Adrenal gland (tissue), 19 donors: ENCODE measurements at regions of chr1 and their contacts with region 1.

Region 1: DNA sequence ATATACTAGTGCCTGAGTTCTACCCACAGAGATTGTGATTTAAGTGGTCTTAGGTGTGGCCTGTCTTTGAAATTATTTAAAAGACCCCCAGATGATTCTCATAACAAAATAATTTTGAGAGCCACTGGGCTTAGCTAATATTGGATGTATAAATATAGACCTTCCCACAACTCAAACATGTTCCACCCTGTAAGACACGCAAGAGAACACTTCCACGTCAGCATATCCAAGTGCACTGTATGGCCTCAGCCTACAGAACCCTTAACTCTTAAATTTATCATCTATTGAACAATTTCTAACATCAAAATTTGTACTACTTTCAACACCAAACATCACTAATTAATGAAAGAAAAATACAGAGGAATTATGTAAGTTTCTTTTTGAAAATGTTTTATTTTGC is 2.5 kb downstream of the FAM177B start:
- DNase-seq: no peak
- H3K4me3 ChIP-seq: no peak overlapping the region
- H3K27ac ChIP-seq: no peak overlapping the region
- H3K4me1 ChIP-seq: no peaks in the 10 kb centered on the region
- H3K27me3 ChIP-seq: no peaks in the 10 kb centered on the region
- CTCF ChIP-seq: no peak
- POLR2A ChIP-seq: no peak

Region 2: DNA sequence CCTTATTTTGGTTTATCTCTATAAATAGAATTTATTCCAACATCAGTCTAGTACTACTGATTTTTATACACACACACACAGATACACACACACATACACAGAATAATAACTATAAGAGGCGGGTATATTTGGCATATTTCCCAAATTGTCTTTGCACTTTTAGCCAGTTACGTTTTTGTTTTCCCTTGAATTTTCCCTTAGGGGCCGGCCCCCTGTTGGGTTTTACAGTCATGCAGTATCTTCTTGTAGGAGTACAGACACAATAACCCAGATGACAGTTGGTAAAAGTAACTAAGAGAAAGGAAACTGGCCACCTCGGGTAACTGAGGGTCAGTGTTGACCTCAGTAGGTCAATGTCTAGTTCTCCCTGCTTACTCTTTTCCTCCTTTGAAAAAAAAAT is 126.3 kb after region 1 on chr1:
- intact Hi-C with region 1: no loop called
- DNase-seq: no peak
- H3K4me3 ChIP-seq: no peak overlapping the region
- H3K27ac ChIP-seq: no peak overlapping the region
- H3K4me1 ChIP-seq: no peaks in the 10 kb centered on the region
- H3K27me3 ChIP-seq: no peaks in the 10 kb centered on the region
- CTCF ChIP-seq: no peak
- POLR2A ChIP-seq: no peak

Region 3: GRCh38 chr1:223091896-223092295 is 352.4 kb after region 1 on chr1:
- intact Hi-C with region 1: loop called in 1 of 2 experiments (anchors 2 kb)
- DNase-seq: no peak
- H3K4me3 ChIP-seq: no peak overlapping the region
- H3K27ac ChIP-seq: no peak overlapping the region
- H3K4me1 ChIP-seq: no peaks in the 10 kb centered on the region
- H3K27me3 ChIP-seq: no peaks in the 10 kb centered on the region
- CTCF ChIP-seq: no peak
- POLR2A ChIP-seq: no peak